ENCODE measurements at regions of chr17 and their contacts with region 1.

Region 1: DNA sequence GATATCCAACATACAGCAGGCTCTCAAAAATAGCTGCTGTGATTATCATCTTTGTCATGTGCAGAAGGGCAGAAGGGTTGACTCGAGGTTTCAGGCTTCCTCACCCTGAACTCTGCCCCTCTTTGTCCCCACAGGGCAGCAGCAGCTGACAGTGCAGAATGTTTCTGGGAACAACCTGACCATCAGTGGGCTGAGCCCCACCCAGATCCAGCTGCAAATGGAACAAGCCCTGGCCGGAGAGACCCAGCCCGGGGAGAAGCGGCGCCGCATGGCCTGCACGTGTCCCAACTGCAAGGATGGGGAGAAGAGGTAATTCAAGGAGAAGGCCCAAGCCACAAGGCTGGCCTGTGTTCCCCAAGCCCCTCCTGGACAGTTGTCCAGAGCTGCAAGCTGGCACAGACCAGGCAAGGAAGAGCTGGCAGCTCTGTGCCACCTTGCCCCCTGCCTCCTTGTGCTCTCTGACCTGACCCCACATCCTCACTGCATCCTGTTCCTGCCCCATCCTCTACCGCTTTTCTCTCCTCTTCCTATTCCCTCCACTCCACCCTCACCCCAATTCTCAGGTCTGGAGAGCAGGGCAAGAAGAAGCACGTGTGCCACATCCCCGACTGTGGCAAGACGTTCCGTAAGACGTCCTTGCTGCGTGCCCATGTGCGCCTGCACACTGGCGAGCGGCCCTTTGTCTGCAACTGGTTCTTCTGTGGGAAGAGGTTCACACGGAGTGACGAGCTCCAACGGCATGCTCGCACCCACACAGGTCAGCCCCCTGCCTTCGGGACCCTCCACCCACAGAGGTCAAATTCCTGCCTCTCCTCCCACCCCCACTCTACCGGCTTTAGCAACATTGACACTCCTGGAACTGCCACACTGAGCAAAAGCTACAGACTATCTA is 16.3 kb upstream of the PNPO start:
- DNase-seq: no peak
- ATAC-seq: no peak
- H3K4me3 ChIP-seq: no peak overlapping the region
- H3K27ac ChIP-seq: no peak overlapping the region
- H3K4me1 ChIP-seq: peaks cover 3% of the 10 kb centered on the region; the same call in 1 of the 2 replicates
- H3K27me3 ChIP-seq: no peaks in the 10 kb centered on the region
- CTCF ChIP-seq: no peak

Region 2: GRCh38 chr17:47895856-47896671 is 29.0 kb before region 1 on chr17 and contains the start of gene SP2:
- CTCF ChIA-PET with region 1: no interaction called
- POLR2A ChIA-PET with region 1: no interaction called
- in situ Hi-C with region 1: no loop called
- intact Hi-C with region 1: no loop called
- DNase-seq: peak; percentile 100
- ATAC-seq: peak; percentile 96
- H3K4me3 ChIP-seq: peak within 1 kb of the TSS; percentile 88 to 98
- H3K27ac ChIP-seq: peak within 1 kb of the TSS; percentile 98
- H3K4me1 ChIP-seq: peaks cover 9% of the 10 kb centered on the region; the same call in 1 of the 2 replicates
- H3K27me3 ChIP-seq: no peaks in the 10 kb centered on the region
- CTCF ChIP-seq: no peak
- total RNA-seq, gene SP2: 25.6 TPM

Region 3: GRCh38 chr17:47907932-47908562 is 17.0 kb before region 1 on chr17:
- CTCF ChIA-PET with region 1: no interaction called
- POLR2A ChIA-PET with region 1: interaction called, 10 read pairs
- in situ Hi-C with region 1: no loop called
- intact Hi-C with region 1: no loop called
- DNase-seq: no peak
- ATAC-seq: no peak
- H3K4me3 ChIP-seq: no peak overlapping the region
- H3K27ac ChIP-seq: no peak overlapping the region
- H3K4me1 ChIP-seq: peaks cover 16% of the 10 kb centered on the region; the same call in 1 of the 2 replicates
- H3K27me3 ChIP-seq: no peaks in the 10 kb centered on the region
- CTCF ChIP-seq: no peak